Naive thymus-derived CD4-positive, alpha-beta T cell (primary cell): ENCODE measurements at regions of chr5 and their contacts with region 1.

Region 1: DNA sequence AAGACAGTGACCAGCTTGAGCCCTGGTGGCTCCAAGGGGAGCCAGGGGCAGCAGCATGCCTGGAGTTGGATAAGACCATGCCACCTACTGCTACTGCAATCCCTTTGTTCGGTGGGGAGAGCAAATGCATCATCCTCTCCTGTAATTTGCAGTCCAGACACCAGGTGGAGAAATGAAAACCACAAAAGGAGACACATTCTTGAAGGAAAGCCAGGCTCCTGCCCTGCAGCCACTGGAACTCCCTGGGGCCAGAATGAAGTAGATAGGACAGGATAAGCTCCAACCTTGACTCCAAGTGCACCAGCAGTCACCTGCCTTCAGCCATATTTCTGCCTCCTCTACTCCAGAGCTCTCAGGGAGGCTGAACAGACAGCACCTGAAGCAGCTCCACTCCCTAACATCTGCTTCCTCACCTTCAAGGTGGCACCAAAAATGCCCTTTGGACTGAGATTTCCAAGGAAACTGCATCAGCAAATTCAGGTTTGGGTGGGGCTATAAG is 65.1 kb upstream of the IQGAP2 start:
- DNase-seq: peak in 7 of 9 donors; percentile 44 to 63 (median 55)
- ATAC-seq: peak; percentile 78
- H3K4me3 ChIP-seq: no peak overlapping the region
- H3K4me3 Mint-ChIP-seq: no peak overlapping the region
- H3K27ac ChIP-seq: no peak overlapping the region
- H3K27ac Mint-ChIP-seq: peak overlapping the region in 4 of 9 donors; percentile 10 to 40 (median 22)
- H3K4me1 ChIP-seq: peaks cover 8 to 15% of the 10 kb centered on the region in 2 donors
- H3K4me1 Mint-ChIP-seq: peaks cover 19 to 35% (median 26%) of the 10 kb centered on the region in 7 donors
- H3K27me3 ChIP-seq: no peaks in the 10 kb centered on the region
- H3K27me3 Mint-ChIP-seq: no peaks in the 10 kb centered on the region

Region 2: GRCh38 chr5:76210946-76211345 is 127.1 kb before region 1 on chr5:
- CTCF ChIA-PET with region 1: no interaction called
- POLR2A ChIA-PET with region 1: no interaction called
- intact Hi-C with region 1: no loop called
- DNase-seq: no peak
- ATAC-seq: no peak
- H3K4me3 ChIP-seq: no peak overlapping the region
- H3K4me3 Mint-ChIP-seq: no peak overlapping the region
- H3K27ac ChIP-seq: no peak overlapping the region
- H3K27ac Mint-ChIP-seq: no peak overlapping the region
- H3K4me1 ChIP-seq: no peaks in the 10 kb centered on the region
- H3K4me1 Mint-ChIP-seq: no peaks in the 10 kb centered on the region
- H3K27me3 ChIP-seq: no peaks in the 10 kb centered on the region
- H3K27me3 Mint-ChIP-seq: peaks cover 0 to 29% (median 5%) of the 10 kb centered on the region in 5 donors

Region 3: DNA sequence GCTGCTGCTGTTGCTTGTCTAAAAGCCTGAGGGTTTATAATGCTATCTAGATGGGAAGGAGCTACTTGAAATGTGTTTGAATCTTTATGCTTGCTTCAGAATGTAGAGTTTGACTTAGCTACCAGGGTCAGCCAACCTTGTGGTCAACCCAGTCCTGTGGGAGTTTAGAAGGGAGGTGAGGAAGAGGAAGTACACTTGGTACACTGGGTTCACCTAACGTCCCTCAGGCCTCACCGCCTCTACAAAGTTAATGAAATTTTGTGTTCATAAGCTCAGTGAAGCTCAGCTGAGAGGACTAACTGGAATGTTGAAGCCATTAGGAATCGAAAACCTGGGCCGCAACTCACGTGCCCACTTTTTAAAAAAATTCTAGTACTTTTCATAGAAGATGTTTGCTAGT is 75.7 kb after region 1 on chr5:
- CTCF ChIA-PET with region 1: no interaction called
- POLR2A ChIA-PET with region 1: no interaction called
- intact Hi-C with region 1: no loop called
- DNase-seq: no peak
- ATAC-seq: no peak
- H3K4me3 ChIP-seq: no peak overlapping the region
- H3K4me3 Mint-ChIP-seq: no peak overlapping the region
- H3K27ac ChIP-seq: no peak overlapping the region
- H3K27ac Mint-ChIP-seq: peak overlapping the region in 1 of 9 donors; percentile 90
- H3K4me1 ChIP-seq: peaks cover 3 to 23% of the 10 kb centered on the region in 2 donors
- H3K4me1 Mint-ChIP-seq: peaks cover 38 to 87% (median 75%) of the 10 kb centered on the region in 7 donors
- H3K27me3 ChIP-seq: no peaks in the 10 kb centered on the region
- H3K27me3 Mint-ChIP-seq: no peaks in the 10 kb centered on the region

Region 4: DNA sequence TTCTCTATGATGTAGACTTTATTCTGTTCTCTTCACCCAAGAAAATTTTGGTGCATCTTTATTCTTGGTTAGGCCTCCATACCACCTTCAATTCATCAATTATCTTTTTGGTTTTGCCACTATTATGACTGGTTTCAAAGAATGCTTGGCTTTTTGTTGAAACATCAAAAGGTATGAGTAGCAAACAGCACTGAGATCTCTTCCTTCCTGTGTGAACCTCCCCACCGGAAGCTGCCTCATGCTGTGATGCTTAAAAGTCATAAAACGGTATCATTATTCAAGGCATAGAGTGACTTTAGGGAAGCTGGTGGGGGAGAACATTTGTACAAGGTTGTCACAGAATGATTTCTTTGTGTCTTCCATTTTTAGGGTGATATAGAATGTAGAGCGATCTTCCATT is 135.7 kb after region 1 on chr5:
- CTCF ChIA-PET with region 1: no interaction called
- POLR2A ChIA-PET with region 1: no interaction called
- intact Hi-C with region 1: loop called in 1 of 2 experiments (anchors 5 kb)
- DNase-seq: peak; percentile 13 to 89 (median 83)
- ATAC-seq: peak; percentile 95
- H3K4me3 ChIP-seq: no peak overlapping the region
- H3K4me3 Mint-ChIP-seq: peak overlapping the region; percentile 19 to 78 (median 58)
- H3K27ac ChIP-seq: peak overlapping the region; percentile 59
- H3K27ac Mint-ChIP-seq: peak overlapping the region; percentile 72 to 98 (median 93)
- H3K4me1 ChIP-seq: peaks cover 54 to 67% of the 10 kb centered on the region in 2 donors
- H3K4me1 Mint-ChIP-seq: peaks cover 56 to 88% (median 79%) of the 10 kb centered on the region in 7 donors
- H3K27me3 ChIP-seq: no peaks in the 10 kb centered on the region
- H3K27me3 Mint-ChIP-seq: no peaks in the 10 kb centered on the region

Region 5: GRCh38 chr5:76582230-76583162 is 244.5 kb after region 1 on chr5:
- CTCF ChIA-PET with region 1: no interaction called
- POLR2A ChIA-PET with region 1: no interaction called
- intact Hi-C with region 1: loop called (anchors 1 to 5 kb)
- DNase-seq: no peak
- ATAC-seq: peak; percentile 76
- H3K4me3 ChIP-seq: no peak overlapping the region
- H3K4me3 Mint-ChIP-seq: no peak overlapping the region
- H3K27ac ChIP-seq: no peak overlapping the region
- H3K27ac Mint-ChIP-seq: peak overlapping the region in 4 of 9 donors; percentile 18 to 76 (median 47)
- H3K4me1 ChIP-seq: no peaks in the 10 kb centered on the region
- H3K4me1 Mint-ChIP-seq: peaks cover 0 to 31% (median 13%) of the 10 kb centered on the region in 7 donors
- H3K27me3 ChIP-seq: no peaks in the 10 kb centered on the region
- H3K27me3 Mint-ChIP-seq: no peaks in the 10 kb centered on the region

Region 6: DNA sequence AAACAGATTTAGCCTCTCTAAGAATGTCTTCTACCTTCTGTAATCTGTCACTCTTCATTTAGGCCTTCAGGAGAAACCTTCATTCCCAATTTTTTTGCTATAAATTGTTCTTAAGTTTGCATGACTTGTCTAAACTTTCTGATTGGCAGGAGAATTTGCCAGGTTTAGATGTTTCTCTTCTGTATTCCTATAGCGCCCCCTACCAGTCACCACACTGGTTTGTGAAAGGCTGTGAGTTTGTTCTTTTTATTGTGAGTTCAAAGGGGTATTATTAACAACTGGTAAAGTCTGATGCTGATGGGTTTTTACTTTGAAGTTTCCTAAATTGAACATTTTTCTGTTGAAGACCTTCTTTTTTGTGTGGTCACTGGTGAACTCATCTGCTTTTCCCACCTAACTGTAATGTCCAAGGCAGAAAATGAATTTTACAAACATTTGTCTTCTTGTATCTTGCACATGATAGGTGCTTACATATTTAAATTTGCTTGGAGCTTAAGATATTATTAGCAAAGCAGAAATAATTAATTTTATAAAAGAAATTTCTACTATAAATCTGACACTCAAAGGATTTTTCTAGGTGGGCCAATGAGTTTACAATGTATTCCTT is 303.6 kb after region 1 on chr5:
- CTCF ChIA-PET with region 1: no interaction called
- POLR2A ChIA-PET with region 1: no interaction called
- intact Hi-C with region 1: loop called (anchors 1 kb)
- DNase-seq: peak; percentile 13 to 71 (median 55)
- ATAC-seq: peak; percentile 78
- H3K4me3 ChIP-seq: no peak overlapping the region
- H3K4me3 Mint-ChIP-seq: no peak overlapping the region
- H3K27ac ChIP-seq: no peak overlapping the region
- H3K27ac Mint-ChIP-seq: no peak overlapping the region
- H3K4me1 ChIP-seq: no peaks in the 10 kb centered on the region
- H3K4me1 Mint-ChIP-seq: peaks cover 0 to 13% (median 0%) of the 10 kb centered on the region in 7 donors
- H3K27me3 ChIP-seq: no peaks in the 10 kb centered on the region
- H3K27me3 Mint-ChIP-seq: no peaks in the 10 kb centered on the region

Region 7: GRCh38 chr5:76771705-76772405 is 433.9 kb after region 1 on chr5:
- CTCF ChIA-PET with region 1: no interaction called
- POLR2A ChIA-PET with region 1: no interaction called
- intact Hi-C with region 1: loop called (anchors 10 kb)
- DNase-seq: no peak
- ATAC-seq: no peak
- H3K4me3 ChIP-seq: no peak overlapping the region
- H3K4me3 Mint-ChIP-seq: no peak overlapping the region
- H3K27ac ChIP-seq: no peak overlapping the region
- H3K27ac Mint-ChIP-seq: peak overlapping the region in 2 of 9 donors; percentile 6 to 32
- H3K4me1 ChIP-seq: no peaks in the 10 kb centered on the region
- H3K4me1 Mint-ChIP-seq: peaks cover 0 to 7% (median 3%) of the 10 kb centered on the region in 7 donors
- H3K27me3 ChIP-seq: no peaks in the 10 kb centered on the region
- H3K27me3 Mint-ChIP-seq: peaks cover 0 to 4% (median 0%) of the 10 kb centered on the region in 5 donors